ENCODE measurements at regions of chr11 and their contacts with region 1.

Region 1: GRCh38 chr11:128279866-128280265 is 307.5 kb downstream of the ETS1 start:
- DNase-seq: no peak
- H3K4me3 ChIP-seq: no peak overlapping the region
- H3K27ac ChIP-seq: no peak overlapping the region
- H3K4me1 ChIP-seq: no peaks in the 10 kb centered on the region
- H3K27me3 ChIP-seq: no peaks in the 10 kb centered on the region
- CTCF ChIP-seq: no peak
- EP300 ChIP-seq: no peak
- POLR2A ChIP-seq: no peak

Region 2: DNA sequence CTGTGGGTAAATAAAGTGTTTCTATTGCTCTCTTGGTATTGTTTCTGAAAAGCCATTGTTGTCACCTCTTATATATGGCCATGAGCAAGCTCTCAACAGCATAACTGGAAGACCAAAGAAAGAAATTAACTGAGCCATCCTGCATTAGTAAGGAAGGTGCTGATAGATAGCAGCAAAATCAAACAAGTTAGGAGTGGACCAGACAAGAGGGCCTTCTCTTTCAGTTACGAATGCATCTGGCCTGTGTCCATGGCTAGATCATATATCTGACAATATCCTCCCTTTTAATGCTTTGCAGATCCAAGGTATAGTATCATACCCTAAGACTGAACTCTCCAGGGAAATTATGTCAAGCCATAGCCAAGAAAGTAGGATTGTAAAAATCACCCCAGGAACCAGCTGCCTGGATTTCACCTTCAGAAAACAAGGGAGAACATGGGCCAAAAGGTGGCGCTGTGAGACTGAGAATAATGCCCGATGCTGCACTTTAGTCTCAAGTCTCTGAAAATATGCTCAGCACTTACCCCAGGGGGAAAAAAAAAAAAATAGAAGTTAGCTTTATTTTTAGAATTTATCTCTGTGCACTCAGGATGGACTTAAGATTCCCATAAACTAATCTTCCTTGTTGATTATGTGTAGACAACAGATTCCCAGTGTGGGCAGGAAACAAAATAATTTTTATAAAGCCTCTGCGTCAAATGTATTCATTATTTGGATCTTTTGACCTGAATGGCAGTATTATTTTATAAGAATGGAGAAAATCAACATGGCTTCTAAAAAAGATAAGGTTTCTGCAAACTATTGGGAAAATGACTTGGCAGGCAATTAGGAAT is 107.6 kb before region 1 on chr11:
- in situ Hi-C with region 1: loop called in 3 of 4 experiments (anchors 10 kb)
- intact Hi-C with region 1: no loop called
- DNase-seq: peak; percentile 88
- H3K4me3 ChIP-seq: no peak overlapping the region
- H3K27ac ChIP-seq: no peak overlapping the region
- H3K4me1 ChIP-seq: peaks cover 0 to 3% (median 0%) of the 10 kb centered on the region in 4 donors
- H3K27me3 ChIP-seq: no peaks in the 10 kb centered on the region
- CTCF ChIP-seq: peak; percentile 71 to 91 (median 75)
- EP300 ChIP-seq: no peak
- POLR2A ChIP-seq: no peak

Region 3: DNA sequence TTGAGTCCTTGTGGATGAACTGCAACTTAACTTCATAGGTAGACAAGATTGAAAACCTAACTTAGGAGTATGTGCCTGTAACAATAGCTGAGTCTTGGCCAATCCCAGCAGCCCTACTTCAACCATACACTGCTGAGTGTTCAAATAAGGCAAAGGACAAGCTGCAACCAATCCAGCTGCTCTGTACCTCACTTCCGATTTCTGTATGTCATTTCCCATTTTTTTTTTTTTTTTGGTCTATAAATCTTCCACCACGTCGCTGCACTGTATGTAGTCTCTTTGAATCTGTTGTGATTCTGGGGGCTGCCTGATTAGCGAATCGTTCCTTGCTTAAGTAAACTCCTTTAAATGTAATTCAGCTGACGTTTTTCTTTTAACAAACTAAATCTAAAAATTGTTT is 378.6 kb after region 1 on chr11:
- in situ Hi-C with region 1: no loop called
- intact Hi-C with region 1: no loop called
- DNase-seq: no peak
- H3K4me3 ChIP-seq: no peak overlapping the region
- H3K27ac ChIP-seq: no peak overlapping the region
- H3K4me1 ChIP-seq: no peaks in the 10 kb centered on the region
- H3K27me3 ChIP-seq: peaks cover 15% of the 10 kb centered on the region
- CTCF ChIP-seq: no peak
- EP300 ChIP-seq: no peak
- POLR2A ChIP-seq: no peak

Measured in transverse colon (tissue), 4 donors.